Astrocyte of the cerebellum (primary cell): ENCODE measurements at regions of chr3 and their contacts with region 1.

Region 1: GRCh38 chr3:29245441-29245840 is 35.4 kb upstream of the RBMS3 start:
- DNase-seq: no peak
- H3K4me3 ChIP-seq: no peak overlapping the region
- CTCF ChIP-seq: no peak

Region 2: GRCh38 chr3:29144807-29145206 is 100.6 kb before region 1 on chr3:
- in situ Hi-C with region 1: no loop called
- DNase-seq: peak; percentile 6
- H3K4me3 ChIP-seq: no peak overlapping the region
- CTCF ChIP-seq: no peak

Region 3: GRCh38 chr3:29212789-29213433 is 32.5 kb before region 1 on chr3:
- in situ Hi-C with region 1: loop called (anchors 5 kb)
- DNase-seq: no peak
- H3K4me3 ChIP-seq: no peak overlapping the region
- CTCF ChIP-seq: no peak